Kidney (tissue), 22 donors: ENCODE measurements at regions of chr15 and their contacts with region 1.

Region 1: DNA sequence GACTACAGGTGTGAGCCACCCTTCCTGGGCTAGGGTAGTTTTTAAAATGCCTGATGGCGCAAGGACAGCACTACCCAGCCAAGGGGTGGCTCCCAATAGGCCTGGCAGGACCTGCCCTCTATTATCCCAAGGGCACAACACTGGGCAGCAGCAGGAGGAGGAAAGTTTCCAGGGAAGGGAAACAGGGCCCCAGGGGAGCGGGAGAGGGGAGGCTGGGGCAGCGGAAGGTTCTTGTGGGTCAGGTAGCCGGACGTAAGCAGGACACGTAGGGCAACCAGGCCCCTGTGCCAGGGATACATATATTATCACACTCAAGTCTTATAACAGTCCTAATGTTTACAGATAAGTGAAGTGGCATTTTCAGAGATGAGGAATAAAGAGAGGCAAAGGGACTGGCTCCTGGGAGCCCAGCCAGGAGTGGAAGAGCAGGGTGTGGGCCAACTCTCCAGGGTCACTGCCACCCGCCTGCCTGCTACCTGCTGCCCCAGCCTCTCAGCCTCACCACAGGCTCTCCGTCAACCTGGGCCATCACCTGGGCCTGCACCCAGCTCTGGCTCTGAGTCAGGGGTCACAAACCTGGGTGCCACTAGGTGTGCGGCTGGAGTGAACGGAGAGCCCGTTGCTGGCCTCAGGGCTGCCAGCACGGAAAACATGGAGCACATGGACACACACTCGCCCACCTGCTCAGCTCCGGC is 73.2 kb upstream of the SNRPA1 start:
- DNase-seq: no peak
- H3K4me3 ChIP-seq: no peak overlapping the region
- H3K27ac ChIP-seq: no peak overlapping the region
- H3K4me1 ChIP-seq: peaks cover 0 to 4% (median 4%) of the 10 kb centered on the region in 3 donors
- H3K27me3 ChIP-seq: no peaks in the 10 kb centered on the region
- CTCF ChIP-seq: no peak

Region 2: DNA sequence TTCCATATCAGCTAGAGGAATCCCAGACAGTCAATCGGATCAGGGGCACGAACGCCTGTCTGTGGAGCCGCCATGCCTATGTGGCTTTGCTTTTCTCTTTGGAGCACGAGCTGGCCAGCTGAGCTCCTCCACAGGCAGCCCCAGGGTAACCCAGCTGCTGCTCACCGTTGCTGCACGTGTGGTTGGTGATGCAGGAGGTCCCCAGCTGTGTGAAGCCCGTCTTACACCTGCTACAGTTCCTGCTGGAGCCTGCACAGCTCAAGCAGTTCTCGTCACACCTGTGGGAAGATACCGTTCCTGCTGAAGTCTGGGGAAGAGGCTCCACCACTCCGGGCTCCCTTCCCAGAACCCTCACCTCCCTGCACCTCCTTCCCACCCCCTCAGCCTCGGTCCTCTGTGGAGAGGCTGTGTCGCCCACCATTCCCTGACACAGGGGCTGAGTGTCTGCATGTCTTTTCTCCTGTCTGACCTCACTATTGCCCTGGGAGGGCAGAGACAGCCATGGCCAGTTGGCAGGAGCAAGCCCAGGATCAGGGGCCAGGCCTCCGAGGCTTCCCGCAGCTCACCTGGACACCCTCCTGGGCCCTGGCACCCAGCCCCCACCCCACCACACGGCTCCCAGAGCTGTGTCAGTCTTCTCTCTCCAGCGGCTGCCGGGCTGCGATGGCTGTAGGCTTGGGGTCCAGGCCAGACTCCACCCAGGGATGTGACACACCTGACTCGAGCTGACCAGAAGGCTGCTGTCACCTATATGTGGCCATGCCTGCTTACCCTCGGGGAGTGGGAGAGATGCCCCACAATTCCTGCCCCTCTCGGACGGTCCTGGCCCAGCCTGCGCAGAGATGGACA is 61.0 kb before region 1 on chr15:
- intact Hi-C with region 1: loop called (anchors 10 kb)
- DNase-seq: peak in 3 of 5 donors; percentile 28 to 39 (median 35)
- H3K4me3 ChIP-seq: no peak overlapping the region
- H3K27ac ChIP-seq: no peak overlapping the region
- H3K4me1 ChIP-seq: no peaks in the 10 kb centered on the region
- H3K27me3 ChIP-seq: no peaks in the 10 kb centered on the region
- CTCF ChIP-seq: no peak

Region 3: GRCh38 chr15:101479866-101480612 is 111.8 kb after region 1 on chr15:
- intact Hi-C with region 1: no loop called
- DNase-seq: no peak
- H3K4me3 ChIP-seq: no peak overlapping the region
- H3K27ac ChIP-seq: no peak overlapping the region
- H3K4me1 ChIP-seq: peaks cover 0 to 4% (median 4%) of the 10 kb centered on the region in 3 donors
- H3K27me3 ChIP-seq: peaks cover 3% of the 10 kb centered on the region
- CTCF ChIP-seq: no peak

Region 4: GRCh38 chr15:101813803-101814534 is 445.7 kb after region 1 on chr15:
- intact Hi-C with region 1: no loop called
- DNase-seq: peak in 1 of 5 donors; percentile 23
- H3K4me3 ChIP-seq: no peak overlapping the region
- H3K27ac ChIP-seq: no peak overlapping the region
- H3K4me1 ChIP-seq: no peaks in the 10 kb centered on the region
- H3K27me3 ChIP-seq: no peaks in the 10 kb centered on the region
- CTCF ChIP-seq: no peak